ENCODE measurements at regions of chr1 and their contacts with region 1.

Region 1: DNA sequence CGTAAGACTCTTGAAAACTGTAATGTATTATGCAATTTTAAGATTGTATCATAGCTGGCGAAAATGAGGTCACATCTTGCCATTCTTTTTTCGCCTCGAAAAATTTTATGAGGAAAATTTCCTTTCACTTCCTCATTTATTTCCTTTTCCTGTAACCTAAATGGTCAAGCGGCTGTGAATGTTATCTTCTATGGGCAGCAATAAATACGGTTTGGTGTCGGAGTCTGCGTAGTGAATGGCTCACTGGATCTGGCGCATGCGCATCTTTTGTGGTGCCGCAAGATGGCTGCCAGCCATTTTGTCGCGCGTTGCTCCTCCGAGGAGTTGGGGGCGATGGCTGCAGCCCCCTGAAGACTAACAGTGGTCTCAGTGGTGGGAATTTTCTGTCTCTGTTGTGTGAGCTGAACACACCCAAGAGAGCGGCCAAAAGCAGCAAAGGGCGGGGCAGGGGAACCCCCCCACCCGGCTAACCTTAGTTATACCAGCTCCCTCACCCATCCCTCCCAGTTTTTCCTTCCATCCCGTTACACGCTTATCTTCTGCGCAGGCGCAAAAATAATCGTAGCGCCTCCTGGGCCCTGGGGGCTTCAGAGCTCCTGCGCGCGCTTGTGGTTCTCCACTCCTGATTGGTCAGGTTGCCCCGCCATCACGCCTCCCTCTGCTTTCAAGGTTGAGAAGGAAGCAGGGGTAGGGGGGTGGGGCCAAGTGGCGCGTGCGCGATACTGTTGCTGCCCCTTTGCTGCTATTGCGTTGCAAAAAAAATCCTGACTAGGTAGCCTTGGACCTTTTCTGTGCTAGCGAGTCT is at the start of gene RPRD2:
- DNase-seq: peak; percentile 99
- H3K4me3 Mint-ChIP-seq: peak within 1 kb of the TSS; percentile 93
- H3K27ac Mint-ChIP-seq: peak within 1 kb of the TSS; percentile 99
- H3K4me1 Mint-ChIP-seq: peaks cover 23% of the 10 kb centered on the region
- H3K27me3 Mint-ChIP-seq: no peaks in the 10 kb centered on the region
- total RNA-seq, gene RPRD2: 21.9 and 22.8 TPM in 2 replicates

Region 2: GRCh38 chr1:150321826-150322166 is 41.8 kb before region 1 on chr1:
- intact Hi-C with region 1: loop called (anchors 1 kb)
- DNase-seq: no peak
- H3K4me3 Mint-ChIP-seq: peak overlapping the region; percentile 100
- H3K27ac Mint-ChIP-seq: peak overlapping the region; percentile 99
- H3K4me1 Mint-ChIP-seq: peaks cover 18% of the 10 kb centered on the region
- H3K27me3 Mint-ChIP-seq: no peaks in the 10 kb centered on the region

Region 3: GRCh38 chr1:150444232-150444631 is 80.6 kb after region 1 on chr1:
- intact Hi-C with region 1: loop called (anchors 5 kb)
- DNase-seq: no peak
- H3K4me3 Mint-ChIP-seq: no peak overlapping the region
- H3K27ac Mint-ChIP-seq: peak overlapping the region; percentile 29
- H3K4me1 Mint-ChIP-seq: peaks cover 3% of the 10 kb centered on the region
- H3K27me3 Mint-ChIP-seq: no peaks in the 10 kb centered on the region

Region 4: GRCh38 chr1:150578965-150579798 is 215.6 kb after region 1 on chr1 and contains the start of gene MCL1:
- intact Hi-C with region 1: loop called (anchors 2 kb)
- DNase-seq: peak; percentile 89
- H3K4me3 Mint-ChIP-seq: peak within 1 kb of the TSS; percentile 98
- H3K27ac Mint-ChIP-seq: peak within 1 kb of the TSS; percentile 98
- H3K4me1 Mint-ChIP-seq: peaks cover 30% of the 10 kb centered on the region
- H3K27me3 Mint-ChIP-seq: no peaks in the 10 kb centered on the region
- total RNA-seq, gene MCL1: 217 and 221 TPM in 2 replicates

Measured in activated T-helper 2 cell treated with anti-CD3 and anti-CD28 coated beads, Interferon-gamma antibody, Interleukin-2, Interleukin-4, amounts not matched to agents 10 μg/mL and 5 μg/mL and 100 μg/mL, durations not matched to agents 14 hours and 24 hours and 36 hours (primary cell).